ENCODE measurements at regions of chr12 and their contacts with region 1.

Region 1: DNA sequence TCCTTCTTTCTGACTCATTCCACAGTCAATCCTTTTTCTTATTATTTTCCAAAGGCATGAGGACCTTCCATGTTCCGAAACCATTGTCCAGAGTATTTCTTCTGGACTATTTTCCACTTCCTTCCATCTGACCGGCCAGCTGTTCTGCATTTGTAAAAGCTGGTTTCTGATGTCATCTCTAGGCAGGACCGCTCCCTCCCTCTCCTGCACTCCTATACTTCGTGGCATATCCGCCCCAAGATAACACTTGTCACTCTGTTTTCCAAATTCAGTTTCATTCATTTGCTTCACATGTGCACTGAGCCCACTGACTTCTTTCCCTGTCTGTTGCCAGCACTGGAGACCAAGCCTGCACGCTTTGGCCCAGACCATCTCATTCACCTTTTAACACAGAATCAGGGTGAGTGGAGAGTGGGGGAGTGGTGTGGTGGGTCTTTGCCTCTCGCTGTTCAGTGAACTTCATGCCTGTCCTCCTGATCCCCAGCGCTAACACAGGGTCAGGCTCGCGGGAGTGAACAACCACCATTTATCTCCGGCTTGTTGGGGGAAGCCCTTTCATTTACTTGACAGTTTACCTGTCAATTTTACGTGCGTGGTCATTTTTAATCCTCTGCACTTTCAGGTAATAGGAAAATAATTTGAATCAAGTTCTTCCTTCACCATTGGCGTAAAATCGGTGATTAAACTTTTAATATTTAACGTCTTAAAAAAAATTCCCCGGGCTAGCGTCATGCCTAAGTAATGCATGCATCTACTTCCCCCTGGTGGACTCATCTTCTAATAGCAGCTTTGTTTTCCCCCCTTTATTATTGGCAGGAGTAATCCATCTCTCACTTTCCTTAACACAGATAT is 52.5 kb downstream of the C12orf75 start:
- DNase-seq: peak; percentile 71
- ATAC-seq: peak; percentile 66
- H3K4me3 ChIP-seq: no peak overlapping the region
- H3K4me3 Mint-ChIP-seq: no peak overlapping the region
- H3K27ac ChIP-seq: no peak overlapping the region
- H3K27ac Mint-ChIP-seq: no peak overlapping the region
- H3K4me1 ChIP-seq: peaks cover 0 to 3% of the 10 kb centered on the region in 2 donors
- H3K4me1 Mint-ChIP-seq: no peaks in the 10 kb centered on the region
- H3K27me3 ChIP-seq: no peaks in the 10 kb centered on the region
- H3K27me3 Mint-ChIP-seq: no peaks in the 10 kb centered on the region
- CTCF ChIP-seq: peak; percentile 87

Region 2: GRCh38 chr12:105171691-105172436 is 211.1 kb before region 1 on chr12:
- CTCF ChIA-PET with region 1: interaction called, 6 read pairs
- POLR2A ChIA-PET with region 1: no interaction called
- intact Hi-C with region 1: loop called (anchors 5 kb)
- DNase-seq: no peak
- ATAC-seq: no peak
- H3K4me3 ChIP-seq: no peak overlapping the region
- H3K4me3 Mint-ChIP-seq: no peak overlapping the region
- H3K27ac ChIP-seq: peak overlapping the region in 1 of 2 donors; percentile 57
- H3K27ac Mint-ChIP-seq: no peak overlapping the region
- H3K4me1 ChIP-seq: no peaks in the 10 kb centered on the region
- H3K4me1 Mint-ChIP-seq: peaks cover 5% of the 10 kb centered on the region
- H3K27me3 ChIP-seq: no peaks in the 10 kb centered on the region
- H3K27me3 Mint-ChIP-seq: no peaks in the 10 kb centered on the region
- CTCF ChIP-seq: no peak

Region 3: DNA sequence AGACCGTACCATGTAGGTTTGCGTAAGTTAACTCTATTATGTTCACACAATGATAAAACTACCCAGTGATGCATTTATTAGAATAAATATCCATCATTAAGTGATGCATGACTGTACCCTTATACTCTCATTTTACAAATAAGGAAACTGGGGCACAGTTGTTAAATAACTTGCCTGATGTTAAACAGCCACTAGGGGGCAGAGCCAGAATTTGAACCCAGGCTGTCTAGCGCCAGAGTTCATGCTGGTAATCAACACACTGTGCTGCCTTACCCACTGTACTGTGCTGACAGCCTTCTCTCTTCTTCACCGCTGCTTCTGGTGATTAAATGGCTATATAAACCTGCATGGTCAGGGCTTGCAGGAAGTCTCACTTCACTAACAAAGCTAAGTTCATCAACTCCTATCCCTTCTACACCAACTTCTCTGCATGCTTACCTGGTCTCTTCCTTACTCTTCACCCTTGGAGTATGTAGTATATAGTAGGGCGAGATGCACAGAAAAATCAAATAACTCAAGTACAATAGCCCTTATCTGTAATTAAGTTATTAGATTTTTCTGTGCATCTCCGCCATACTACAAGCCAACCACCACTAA is 103.4 kb before region 1 on chr12:
- CTCF ChIA-PET with region 1: interaction called, 8 read pairs
- POLR2A ChIA-PET with region 1: no interaction called
- intact Hi-C with region 1: loop called (anchors 1 kb)
- DNase-seq: peak; percentile 47
- ATAC-seq: no peak
- H3K4me3 ChIP-seq: no peak overlapping the region
- H3K4me3 Mint-ChIP-seq: no peak overlapping the region
- H3K27ac ChIP-seq: no peak overlapping the region
- H3K27ac Mint-ChIP-seq: no peak overlapping the region
- H3K4me1 ChIP-seq: no peaks in the 10 kb centered on the region
- H3K4me1 Mint-ChIP-seq: no peaks in the 10 kb centered on the region
- H3K27me3 ChIP-seq: no peaks in the 10 kb centered on the region
- H3K27me3 Mint-ChIP-seq: peaks cover 14% of the 10 kb centered on the region
- CTCF ChIP-seq: peak; percentile 59

Region 4: DNA sequence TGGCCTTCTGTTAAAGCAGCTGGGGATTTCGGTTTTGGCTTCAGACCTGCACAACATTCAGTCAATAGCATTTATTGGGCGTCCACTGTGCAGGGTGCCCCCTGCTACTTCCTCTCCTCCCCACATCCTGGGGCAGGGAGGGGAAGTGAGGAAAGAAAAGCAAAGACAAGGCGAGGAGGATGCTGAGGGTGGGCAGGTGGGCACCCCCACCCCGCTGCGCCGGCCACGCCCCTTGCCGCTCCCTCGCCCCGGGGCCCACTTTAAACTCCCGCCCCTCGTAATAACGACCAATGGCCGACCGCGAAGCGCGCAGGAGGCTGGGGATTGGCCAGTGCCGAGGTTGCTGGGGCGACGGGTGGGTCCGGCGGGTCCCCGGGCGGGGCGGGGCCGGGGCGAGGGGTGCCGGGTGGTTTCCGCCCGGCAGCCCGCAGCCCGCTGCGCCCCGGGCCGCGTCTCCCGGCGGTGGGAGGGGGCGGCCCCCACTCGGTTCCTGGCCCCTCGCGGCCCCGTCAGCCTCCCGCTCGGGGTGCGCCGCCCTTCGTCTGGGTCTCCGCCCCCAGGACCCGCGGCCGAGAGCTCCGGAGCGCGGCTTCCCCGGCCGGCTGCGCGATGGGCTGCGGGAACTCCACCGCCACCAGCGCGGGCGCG is 52.6 kb before region 1 on chr12 and contains the start of gene C12orf75:
- CTCF ChIA-PET with region 1: interaction called, 5 read pairs
- POLR2A ChIA-PET with region 1: no interaction called
- intact Hi-C with region 1: loop called (anchors 5 kb)
- DNase-seq: peak; percentile 89
- ATAC-seq: peak; percentile 93
- H3K4me3 ChIP-seq: peak within 1 kb of the TSS; percentile 25 to 78 (median 69)
- H3K4me3 Mint-ChIP-seq: peak within 1 kb of the TSS; percentile 92
- H3K27ac ChIP-seq: peak within 1 kb of the TSS; percentile 52 to 69
- H3K27ac Mint-ChIP-seq: peak within 1 kb of the TSS; percentile 86
- H3K4me1 ChIP-seq: peaks cover 27 to 38% of the 10 kb centered on the region in 2 donors
- H3K4me1 Mint-ChIP-seq: peaks cover 44% of the 10 kb centered on the region
- H3K27me3 ChIP-seq: no peaks in the 10 kb centered on the region
- H3K27me3 Mint-ChIP-seq: no peaks in the 10 kb centered on the region
- CTCF ChIP-seq: no peak
- total RNA-seq, gene C12orf75: 7.9 and 12.9 TPM in 2 replicates

Region 5: DNA sequence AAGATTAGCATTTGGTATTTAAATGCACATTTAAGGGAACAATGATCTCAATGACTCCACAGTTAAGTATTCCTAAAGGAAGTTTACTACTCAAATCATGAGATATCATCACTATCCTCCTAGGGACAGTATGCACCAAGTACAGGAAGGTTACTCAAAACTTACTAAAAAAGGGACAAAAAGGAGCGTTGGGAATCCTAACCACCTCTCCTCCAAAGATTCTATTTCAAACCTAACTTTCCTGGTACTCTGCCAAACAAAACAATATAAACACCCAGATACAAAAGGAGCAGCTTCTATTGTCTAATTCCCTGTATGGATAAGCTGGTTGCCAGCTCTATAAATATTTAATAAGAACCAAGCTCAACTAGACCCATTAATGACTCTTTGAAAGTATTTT is 378.1 kb after region 1 on chr12:
- CTCF ChIA-PET with region 1: no interaction called
- POLR2A ChIA-PET with region 1: no interaction called
- intact Hi-C with region 1: no loop called
- DNase-seq: no peak
- ATAC-seq: no peak
- H3K4me3 ChIP-seq: no peak overlapping the region
- H3K4me3 Mint-ChIP-seq: no peak overlapping the region
- H3K27ac ChIP-seq: no peak overlapping the region
- H3K27ac Mint-ChIP-seq: no peak overlapping the region
- H3K4me1 ChIP-seq: peaks cover 0 to 4% of the 10 kb centered on the region in 2 donors
- H3K4me1 Mint-ChIP-seq: peaks cover 15% of the 10 kb centered on the region
- H3K27me3 ChIP-seq: no peaks in the 10 kb centered on the region
- H3K27me3 Mint-ChIP-seq: peaks cover 5% of the 10 kb centered on the region
- CTCF ChIP-seq: no peak

Measured in B cell (primary cell).